Body of pancreas (tissue), 4 donors: ENCODE measurements at regions of chr17 and their contacts with region 1.

Region 1: GRCh38 chr17:7989781-7990655 is 12.4 kb upstream of the GUCY2D start:
- DNase-seq: peak; percentile 83 to 90 (median 86)
- ATAC-seq: peak; percentile 86
- H3K4me3 ChIP-seq: no peak overlapping the region
- H3K27ac ChIP-seq: peak overlapping the region in 3 of 4 donors; percentile 46 to 65 (median 56)
- H3K4me1 ChIP-seq: peaks cover 3% of the 10 kb centered on the region
- H3K27me3 ChIP-seq: no peaks in the 10 kb centered on the region
- CTCF ChIP-seq: peak; percentile 91 to 99 (median 93)
- POLR2A ChIP-seq: peak in 2 of 3 donors; percentile 33 to 40

Region 2: GRCh38 chr17:7825206-7825990 is 164.6 kb before region 1 on chr17:
- intact Hi-C with region 1: loop called (anchors 10 kb)
- DNase-seq: peak in 1 of 4 donors; percentile 34
- ATAC-seq: peak; percentile 39
- H3K4me3 ChIP-seq: no peak overlapping the region
- H3K27ac ChIP-seq: no peak overlapping the region
- H3K4me1 ChIP-seq: peaks cover 10% of the 10 kb centered on the region
- H3K27me3 ChIP-seq: no peaks in the 10 kb centered on the region
- CTCF ChIP-seq: no peak
- POLR2A ChIP-seq: no peak

Region 3: DNA sequence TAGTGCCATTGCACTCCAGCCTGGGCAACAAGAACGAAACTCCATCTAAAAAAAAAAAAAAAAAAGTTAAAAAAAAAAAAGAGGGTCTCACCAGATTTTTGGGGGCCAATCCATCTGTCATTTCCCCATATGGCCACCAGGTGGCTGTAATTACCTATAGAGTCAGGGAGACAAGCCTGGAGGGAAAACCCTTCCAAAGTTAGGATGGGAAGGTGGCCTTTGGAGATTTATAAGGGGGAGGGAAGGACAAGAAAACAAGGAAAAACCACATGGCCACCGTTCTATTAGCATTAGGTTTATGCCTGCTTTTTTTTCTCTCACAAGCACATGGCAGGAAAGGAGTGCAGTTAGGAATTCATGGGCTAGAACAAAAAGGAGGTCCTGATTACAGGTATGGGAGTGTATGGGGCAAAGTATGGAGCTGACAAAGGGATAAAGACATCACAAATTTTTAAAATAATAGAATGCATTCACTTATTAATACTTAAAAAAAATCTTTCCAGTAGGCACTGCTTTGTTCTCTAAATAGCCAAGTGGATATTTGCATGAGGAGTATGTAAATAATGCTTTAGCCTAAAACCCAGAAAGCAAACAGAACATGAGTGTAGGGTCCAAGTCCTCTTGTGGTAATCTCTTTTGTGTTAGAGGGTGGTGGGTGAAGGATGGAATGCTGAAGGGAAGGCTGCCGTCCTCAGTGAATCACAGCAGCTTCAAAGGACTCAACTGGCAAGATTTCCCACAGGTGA is 127.2 kb before region 1 on chr17:
- intact Hi-C with region 1: loop called (anchors 5 kb)
- DNase-seq: peak; percentile 37 to 65 (median 56)
- ATAC-seq: no peak
- H3K4me3 ChIP-seq: no peak overlapping the region
- H3K27ac ChIP-seq: no peak overlapping the region
- H3K4me1 ChIP-seq: peaks cover 15% of the 10 kb centered on the region
- H3K27me3 ChIP-seq: no peaks in the 10 kb centered on the region
- CTCF ChIP-seq: peak; percentile 46 to 96 (median 82)
- POLR2A ChIP-seq: no peak

Region 4: GRCh38 chr17:7912927-7913524 is 77.0 kb before region 1 on chr17:
- intact Hi-C with region 1: loop called (anchors 5 kb)
- DNase-seq: peak in 3 of 4 donors; percentile 40 to 74 (median 45)
- ATAC-seq: peak; percentile 34
- H3K4me3 ChIP-seq: no peak overlapping the region
- H3K27ac ChIP-seq: peak overlapping the region in 1 of 4 donors; percentile 32
- H3K4me1 ChIP-seq: peaks cover 23% of the 10 kb centered on the region
- H3K27me3 ChIP-seq: no peaks in the 10 kb centered on the region
- CTCF ChIP-seq: peak; percentile 38 to 93 (median 83)
- POLR2A ChIP-seq: no peak

Region 5: DNA sequence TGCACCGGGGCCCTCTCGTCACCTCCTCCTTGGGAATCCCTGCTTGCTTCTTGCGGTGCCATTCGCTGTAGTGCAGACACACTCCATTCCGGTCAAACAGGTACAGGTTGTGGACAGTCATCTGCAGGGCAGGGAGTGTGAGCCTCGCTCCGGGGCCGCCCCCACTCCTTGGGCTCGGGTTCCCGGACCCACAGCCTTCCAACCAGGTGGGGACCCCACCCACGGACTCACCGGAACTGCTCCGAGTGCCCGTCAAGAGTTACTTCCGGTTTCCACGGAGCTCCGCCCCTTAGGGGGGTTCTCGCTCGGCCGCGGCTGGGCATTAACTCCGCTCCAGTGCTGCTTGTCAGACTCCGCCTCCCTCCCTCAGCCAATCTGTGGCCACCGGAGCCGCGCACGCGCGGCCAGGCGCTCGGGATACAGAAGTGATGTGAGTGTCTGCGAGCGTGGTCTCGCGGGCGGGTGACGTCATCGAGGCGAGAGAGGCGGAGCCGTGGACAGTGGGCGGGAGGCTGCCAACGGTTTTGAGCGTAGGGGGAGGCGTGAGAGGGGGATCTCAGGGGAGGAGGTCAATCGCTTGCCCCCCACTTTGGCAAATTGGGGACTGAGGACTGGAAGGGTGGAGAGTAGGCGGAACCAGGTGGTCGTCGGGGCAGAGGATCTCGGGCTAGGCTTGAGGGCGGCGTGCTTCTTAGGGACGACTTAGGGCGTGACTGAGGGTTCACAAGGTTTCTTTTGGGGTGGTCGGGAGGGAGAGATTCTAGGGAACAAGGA is 58.1 kb before region 1 on chr17 and contains the starts of genes CNTROB and TRAPPC1:
- intact Hi-C with region 1: loop called (anchors 5 kb)
- DNase-seq: peak; percentile 99 to 100 (median 100)
- ATAC-seq: peak; percentile 99
- H3K4me3 ChIP-seq: peak within 1 kb of the TSS; percentile 47 to 72
- H3K27ac ChIP-seq: peak within 1 kb of the TSS; percentile 43 to 80 (median 56)
- H3K4me1 ChIP-seq: peaks cover 24% of the 10 kb centered on the region
- H3K27me3 ChIP-seq: no peaks in the 10 kb centered on the region
- CTCF ChIP-seq: peak in 1 of 7 experiments; percentile 14
- POLR2A ChIP-seq: peak; percentile 27 to 82 (median 68)
- total RNA-seq, gene CNTROB: 14.0 to 27.0 TPM
- total RNA-seq, gene TRAPPC1: 10.5 to 40.0 TPM

Region 6: DNA sequence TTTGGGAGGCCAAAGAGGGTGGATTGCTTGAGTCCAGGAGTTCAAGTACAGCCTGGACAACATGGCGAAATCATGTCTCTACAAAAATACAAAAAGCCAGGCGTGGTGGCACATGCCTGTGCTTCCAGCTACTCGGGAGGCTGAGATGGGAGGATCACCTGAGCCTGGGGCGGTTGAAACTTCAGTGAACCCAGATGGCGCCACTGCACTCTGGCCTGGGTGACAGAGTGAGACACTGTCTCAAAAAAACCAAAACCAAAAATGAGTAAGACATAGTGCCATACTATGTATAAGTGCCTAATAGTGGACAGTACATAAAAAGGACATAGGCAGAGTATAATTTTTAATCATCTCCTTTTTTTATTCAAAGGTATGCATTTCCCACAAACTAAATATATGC is 253.8 kb after region 1 on chr17:
- intact Hi-C with region 1: no loop called
- DNase-seq: no peak
- ATAC-seq: no peak
- H3K4me3 ChIP-seq: no peak overlapping the region
- H3K27ac ChIP-seq: no peak overlapping the region
- H3K4me1 ChIP-seq: peaks cover 6% of the 10 kb centered on the region
- H3K27me3 ChIP-seq: no peaks in the 10 kb centered on the region
- CTCF ChIP-seq: no peak
- POLR2A ChIP-seq: no peak